Adrenal gland (tissue), 19 donors: ENCODE measurements at regions of chr11 and their contacts with region 1.

Region 1: GRCh38 chr11:86456052-86456939 is 81.6 kb downstream of the CCDC81 start:
- DNase-seq: peak; percentile 79 to 96 (median 91)
- H3K4me3 ChIP-seq: no peak overlapping the region
- H3K27ac ChIP-seq: peak overlapping the region in 1 of 5 donors; percentile 23
- H3K4me1 ChIP-seq: peaks cover 0 to 21% of the 10 kb centered on the region in 2 donors
- H3K27me3 ChIP-seq: no peaks in the 10 kb centered on the region
- CTCF ChIP-seq: peak; percentile 77 to 94 (median 90)
- POLR2A ChIP-seq: no peak

Region 2: DNA sequence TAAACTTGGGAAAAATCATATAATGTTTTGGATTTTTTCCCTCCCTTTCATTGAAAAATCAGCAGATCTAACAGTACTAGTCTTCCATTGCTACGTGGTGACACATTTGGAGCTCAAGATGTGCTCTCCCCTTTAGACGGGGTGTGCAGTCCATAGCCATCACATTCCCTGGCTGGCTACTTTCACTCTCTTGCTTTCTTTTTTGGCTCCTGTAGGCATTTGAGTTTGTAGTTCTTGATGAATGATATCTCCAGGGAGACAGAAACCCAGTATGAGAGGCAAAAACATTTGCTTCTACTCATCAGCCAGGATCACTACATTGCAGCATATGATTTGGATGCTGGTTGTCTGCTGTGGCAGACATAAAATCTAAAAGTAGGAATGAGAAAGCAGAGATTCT is 69.5 kb before region 1 on chr11:
- intact Hi-C with region 1: no loop called
- DNase-seq: no peak
- H3K4me3 ChIP-seq: no peak overlapping the region
- H3K27ac ChIP-seq: no peak overlapping the region
- H3K4me1 ChIP-seq: no peaks in the 10 kb centered on the region
- H3K27me3 ChIP-seq: no peaks in the 10 kb centered on the region
- CTCF ChIP-seq: no peak
- POLR2A ChIP-seq: no peak

Region 3: DNA sequence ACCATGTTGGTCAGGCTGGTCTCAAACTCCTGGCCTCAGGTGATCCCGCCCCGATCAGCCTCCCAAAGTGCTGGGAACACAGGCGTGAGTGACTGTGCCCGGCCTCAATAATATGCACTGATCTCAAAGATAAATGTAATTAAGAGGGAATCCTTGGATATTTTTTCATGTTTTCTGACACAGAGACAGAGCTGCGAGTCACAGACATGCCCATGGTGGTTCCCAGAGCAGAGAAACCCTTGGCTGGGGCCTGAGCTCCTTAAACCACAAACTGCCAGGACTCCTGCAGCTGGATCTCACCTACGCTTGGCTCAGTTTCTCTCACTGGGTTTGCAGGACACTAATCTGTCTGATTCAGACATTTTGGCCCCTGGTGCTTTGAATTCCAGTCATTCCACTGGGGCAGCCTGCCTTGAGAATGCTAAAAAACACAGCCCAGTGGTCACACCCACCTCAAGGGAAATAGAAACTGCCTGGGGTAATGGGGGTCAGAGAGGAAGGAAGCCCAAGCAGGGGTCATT is 40.9 kb after region 1 on chr11:
- intact Hi-C with region 1: no loop called
- DNase-seq: no peak
- H3K4me3 ChIP-seq: no peak overlapping the region
- H3K27ac ChIP-seq: no peak overlapping the region
- H3K4me1 ChIP-seq: peaks cover 0 to 8% of the 10 kb centered on the region in 2 donors
- H3K27me3 ChIP-seq: no peaks in the 10 kb centered on the region
- CTCF ChIP-seq: no peak
- POLR2A ChIP-seq: no peak

Region 4: GRCh38 chr11:86610559-86611341 is 154.5 kb after region 1 on chr11:
- intact Hi-C with region 1: loop called in 1 of 2 experiments (anchors 10 kb)
- DNase-seq: no peak
- H3K4me3 ChIP-seq: no peak overlapping the region
- H3K27ac ChIP-seq: no peak overlapping the region
- H3K4me1 ChIP-seq: peaks cover 0 to 23% of the 10 kb centered on the region in 2 donors
- H3K27me3 ChIP-seq: no peaks in the 10 kb centered on the region
- CTCF ChIP-seq: no peak
- POLR2A ChIP-seq: no peak

Region 5: DNA sequence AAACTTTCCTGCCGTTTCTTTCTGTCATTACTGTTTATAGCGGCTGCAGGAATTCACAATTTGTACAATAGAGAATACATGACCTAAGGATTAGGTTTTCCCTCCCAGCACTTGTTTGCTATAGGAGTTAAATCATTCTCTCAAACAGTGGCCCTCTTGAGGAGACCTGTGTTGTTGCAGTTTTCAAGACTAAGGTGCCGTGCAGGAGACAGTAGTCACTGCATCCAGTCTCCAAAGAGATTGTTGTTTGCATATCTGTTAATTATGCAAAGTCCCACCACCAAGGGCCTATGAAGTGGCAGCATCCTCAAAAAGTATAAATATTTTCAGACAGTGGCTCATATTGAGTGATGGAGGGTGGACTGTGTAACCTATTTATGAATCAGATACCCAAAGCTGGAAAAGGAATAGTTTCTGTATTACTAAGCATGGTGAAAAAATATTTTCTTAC is 346.3 kb after region 1 on chr11:
- intact Hi-C with region 1: loop called in 1 of 2 experiments (anchors 5 kb)
- DNase-seq: peak in 3 of 7 donors; percentile 38 to 66 (median 47)
- H3K4me3 ChIP-seq: peak overlapping the region in 1 of 4 donors; percentile 17
- H3K27ac ChIP-seq: no peak overlapping the region
- H3K4me1 ChIP-seq: peaks cover 6 to 20% of the 10 kb centered on the region in 2 donors
- H3K27me3 ChIP-seq: no peaks in the 10 kb centered on the region
- CTCF ChIP-seq: peak; percentile 30 to 71 (median 59)
- POLR2A ChIP-seq: no peak

Region 6: DNA sequence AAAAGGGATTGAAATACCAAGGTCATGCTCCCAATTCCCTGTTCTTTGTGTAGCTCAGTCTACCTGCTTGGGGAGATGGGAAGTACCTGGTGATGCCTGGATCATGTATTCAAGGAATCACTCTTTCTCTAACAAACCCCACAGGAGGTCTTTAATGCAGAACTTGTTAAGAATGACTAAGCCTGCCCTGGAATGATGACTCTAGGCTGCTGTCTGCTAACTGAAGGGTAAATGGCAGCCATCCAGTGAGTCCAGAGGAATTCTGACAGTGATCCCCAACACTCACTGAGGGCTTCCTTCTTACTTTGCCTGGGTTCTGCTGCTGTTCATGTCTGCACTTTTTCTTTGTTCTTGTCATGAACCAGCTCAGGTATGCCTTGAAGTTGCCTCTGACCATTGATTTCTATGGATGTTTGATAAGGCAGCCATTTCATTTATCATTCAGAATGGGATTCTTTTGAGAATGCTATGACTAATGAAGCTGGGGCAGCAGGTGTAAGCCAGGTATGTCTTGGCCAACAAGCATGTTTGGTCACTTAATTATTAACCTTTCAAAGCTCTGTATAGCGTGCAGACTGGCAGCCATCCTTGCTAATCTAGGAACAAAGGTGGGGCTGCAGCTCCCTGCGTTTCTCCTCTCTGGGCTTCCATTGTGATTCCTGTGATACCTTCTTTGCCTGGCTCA is 355.5 kb after region 1 on chr11:
- intact Hi-C with region 1: loop called (anchors 5 kb)
- DNase-seq: no peak
- H3K4me3 ChIP-seq: no peak overlapping the region
- H3K27ac ChIP-seq: no peak overlapping the region
- H3K4me1 ChIP-seq: peaks cover 0 to 7% of the 10 kb centered on the region in 2 donors
- H3K27me3 ChIP-seq: no peaks in the 10 kb centered on the region
- CTCF ChIP-seq: no peak
- POLR2A ChIP-seq: no peak

Region 7: GRCh38 chr11:86818466-86819192 is 362.3 kb after region 1 on chr11:
- intact Hi-C with region 1: loop called (anchors 5 kb)
- DNase-seq: no peak
- H3K4me3 ChIP-seq: no peak overlapping the region
- H3K27ac ChIP-seq: no peak overlapping the region
- H3K4me1 ChIP-seq: peaks cover 0 to 7% of the 10 kb centered on the region in 2 donors
- H3K27me3 ChIP-seq: no peaks in the 10 kb centered on the region
- CTCF ChIP-seq: peak; percentile 80 to 87 (median 83)
- POLR2A ChIP-seq: no peak